Activated naive CD4-positive, alpha-beta T cell treated with anti-CD3 and anti-CD28 coated beads for 36 hours (primary cell): ENCODE measurements at regions of chr2 and their contacts with region 1.

Region 1: DNA sequence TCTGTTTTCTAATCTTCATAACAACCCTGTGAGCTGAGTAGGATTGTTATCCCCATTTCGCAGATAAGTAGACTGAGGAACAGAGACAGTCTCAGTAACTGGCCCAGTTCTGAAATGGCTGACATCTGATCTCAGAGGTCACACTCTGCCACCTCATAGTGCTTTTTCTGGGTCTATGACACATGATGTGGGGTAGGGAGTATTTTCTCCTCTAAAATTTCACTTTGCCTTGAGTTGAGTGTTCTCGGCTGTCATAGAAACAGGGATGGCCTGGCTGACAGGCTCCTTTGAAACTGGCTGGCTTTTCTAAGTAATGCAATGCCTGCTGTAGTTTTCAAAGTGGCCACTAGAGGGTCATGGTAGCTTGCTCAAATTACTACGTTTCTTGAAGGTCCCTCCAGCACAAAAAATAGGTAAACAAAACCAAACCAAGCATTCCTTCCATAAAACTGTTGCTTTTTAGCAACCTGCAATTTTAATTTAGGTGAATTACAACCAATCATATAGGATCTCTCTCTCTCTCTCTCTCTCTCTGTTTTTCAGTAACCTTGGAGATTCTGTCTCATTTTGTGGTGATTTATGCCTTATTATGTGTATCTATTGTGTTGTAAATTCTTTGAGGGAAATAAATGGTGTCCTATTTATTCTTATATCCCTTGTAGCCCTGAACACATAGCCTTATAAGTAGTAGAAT is 84.2 kb upstream of the TTN start:
- DNase-seq: peak; percentile 82
- H3K4me3 Mint-ChIP-seq: no peak overlapping the region
- H3K27ac Mint-ChIP-seq: no peak overlapping the region
- H3K4me1 Mint-ChIP-seq: peaks cover 9% of the 10 kb centered on the region
- H3K27me3 Mint-ChIP-seq: no peaks in the 10 kb centered on the region

Region 2: DNA sequence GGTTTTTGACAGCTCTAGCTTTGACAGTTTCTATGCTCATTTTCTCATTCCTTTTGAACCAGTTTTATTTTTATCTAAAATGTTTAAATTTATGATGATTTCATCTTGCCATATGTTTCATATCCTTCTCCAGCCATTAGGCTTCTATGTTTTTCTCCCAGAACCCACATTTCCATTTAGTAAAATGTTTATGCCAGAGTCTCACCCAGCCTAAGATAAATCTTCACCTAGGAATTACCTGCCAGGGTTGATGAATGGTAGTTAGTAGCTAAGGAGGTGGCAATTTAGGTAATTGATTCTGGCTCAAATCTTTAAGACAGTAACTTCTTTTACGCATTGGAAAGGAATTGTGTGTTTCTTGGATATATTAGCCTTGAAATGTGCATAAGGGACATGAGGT is 524.1 kb before region 1 on chr2:
- CTCF ChIA-PET with region 1: no interaction called
- intact Hi-C with region 1: no loop called
- DNase-seq: no peak
- H3K4me3 Mint-ChIP-seq: no peak overlapping the region
- H3K27ac Mint-ChIP-seq: no peak overlapping the region
- H3K4me1 Mint-ChIP-seq: no peaks in the 10 kb centered on the region
- H3K27me3 Mint-ChIP-seq: no peaks in the 10 kb centered on the region

Region 3: DNA sequence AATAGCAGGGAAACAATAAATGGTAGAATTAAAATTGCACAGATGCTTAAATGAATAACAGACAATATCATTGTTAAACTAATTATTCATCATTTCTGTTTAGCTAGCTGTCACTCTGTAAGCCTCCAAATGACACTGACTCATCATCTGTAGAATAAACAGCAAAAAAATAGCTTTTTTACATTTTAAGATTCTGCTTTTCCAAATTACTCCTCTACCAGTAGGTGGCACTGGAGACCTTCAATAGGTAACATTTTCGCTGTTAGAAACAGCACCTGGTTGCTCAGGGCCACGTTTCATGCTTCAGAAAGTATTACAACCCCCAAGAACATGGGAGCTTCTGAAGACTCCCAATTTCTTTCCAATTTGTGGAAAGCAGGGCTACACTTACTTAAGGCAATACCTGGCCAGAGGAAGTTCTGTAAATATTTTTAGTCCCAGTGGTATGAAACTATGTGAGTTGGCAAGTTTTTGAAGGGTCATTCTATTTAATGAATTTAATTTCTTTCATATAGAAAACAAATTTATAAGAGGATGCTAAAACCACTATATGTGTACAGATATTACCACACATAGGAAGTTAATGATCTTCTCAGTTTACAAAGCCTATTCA is 129.5 kb before region 1 on chr2:
- CTCF ChIA-PET with region 1: interaction called, 3 read pairs
- intact Hi-C with region 1: loop called (anchors 2 kb)
- DNase-seq: peak; percentile 51
- H3K4me3 Mint-ChIP-seq: no peak overlapping the region
- H3K27ac Mint-ChIP-seq: no peak overlapping the region
- H3K4me1 Mint-ChIP-seq: no peaks in the 10 kb centered on the region
- H3K27me3 Mint-ChIP-seq: no peaks in the 10 kb centered on the region

Region 4: GRCh38 chr2:178796079-178796677 is 95.2 kb before region 1 on chr2:
- CTCF ChIA-PET with region 1: interaction called, 6 read pairs
- intact Hi-C with region 1: loop called (anchors 1 kb)
- DNase-seq: no peak
- H3K4me3 Mint-ChIP-seq: no peak overlapping the region
- H3K27ac Mint-ChIP-seq: no peak overlapping the region
- H3K4me1 Mint-ChIP-seq: no peaks in the 10 kb centered on the region
- H3K27me3 Mint-ChIP-seq: no peaks in the 10 kb centered on the region